AG04449 (cell line): ENCODE measurements at regions of chr20 and their contacts with region 1.

Region 1: GRCh38 chr20:44683263-44684046 is 31.7 kb upstream of the CCN5 start:
- DNase-seq: no peak
- H3K4me3 ChIP-seq: no peak overlapping the region
- CTCF ChIP-seq: peak; percentile 77

Region 2: GRCh38 chr20:44582311-44583025 is 101.0 kb before region 1 on chr20 and contains the start of gene PKIG:
- CTCF ChIA-PET with region 1: no interaction called
- POLR2A ChIA-PET with region 1: no interaction called
- DNase-seq: peak; percentile 29
- H3K4me3 ChIP-seq: peak within 1 kb of the TSS; percentile 60
- CTCF ChIP-seq: no peak

Region 3: GRCh38 chr20:44642203-44643153 is 41.0 kb before region 1 on chr20:
- CTCF ChIA-PET with region 1: interaction called, 18 read pairs
- POLR2A ChIA-PET with region 1: interaction called, 6 read pairs
- DNase-seq: peak; percentile 64
- H3K4me3 ChIP-seq: peak overlapping the region; percentile 20; the same call in 1 of the 2 replicates
- CTCF ChIP-seq: no peak

Region 4: DNA sequence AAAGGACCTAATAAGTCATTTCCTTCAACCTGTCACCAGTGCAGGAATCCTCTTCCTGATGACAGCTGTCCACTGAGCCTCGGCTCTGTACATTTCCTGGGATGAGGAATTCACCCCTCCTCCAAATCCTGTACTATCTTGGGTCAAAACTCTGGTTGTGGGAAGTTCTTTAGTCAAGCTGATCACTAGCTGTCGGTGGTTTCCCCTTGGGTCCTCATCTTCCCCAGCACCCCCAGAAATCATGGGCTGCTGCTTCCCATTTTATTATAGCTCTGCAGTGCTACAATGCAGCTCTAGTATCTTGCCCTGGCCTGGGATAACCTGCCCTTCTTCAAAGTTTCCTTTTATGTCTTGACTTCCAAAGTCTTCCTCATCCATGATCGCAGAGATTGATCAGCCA is 17.4 kb before region 1 on chr20:
- CTCF ChIA-PET with region 1: interaction called, 23 read pairs
- POLR2A ChIA-PET with region 1: no interaction called
- DNase-seq: no peak
- H3K4me3 ChIP-seq: no peak overlapping the region
- CTCF ChIP-seq: no peak

Region 5: DNA sequence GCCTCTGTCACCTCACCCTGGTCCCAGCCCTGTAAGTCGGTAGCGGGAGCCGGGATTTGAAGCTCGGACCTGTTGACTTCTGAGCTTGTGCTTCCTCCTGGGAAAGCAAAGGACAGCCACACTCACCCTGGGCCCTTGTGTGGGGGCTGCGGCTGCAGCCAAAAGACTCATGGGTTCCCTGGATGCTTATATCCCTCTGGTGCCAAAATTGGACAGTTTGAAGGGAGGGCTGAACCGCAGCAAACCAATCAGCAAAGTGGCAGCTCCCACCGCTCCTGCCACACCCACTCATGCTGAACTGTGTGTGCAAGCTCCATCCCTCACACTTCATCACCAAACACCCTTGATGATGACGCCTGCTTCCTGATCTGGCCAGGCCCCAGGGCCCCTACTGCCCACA is 27.8 kb after region 1 on chr20:
- CTCF ChIA-PET with region 1: interaction called, 801 read pairs
- POLR2A ChIA-PET with region 1: no interaction called
- DNase-seq: no peak
- H3K4me3 ChIP-seq: no peak overlapping the region
- CTCF ChIP-seq: no peak

Region 6: GRCh38 chr20:44747166-44748004 is 63.9 kb after region 1 on chr20:
- CTCF ChIA-PET with region 1: interaction called, 169 read pairs
- POLR2A ChIA-PET with region 1: no interaction called
- DNase-seq: no peak
- H3K4me3 ChIP-seq: no peak overlapping the region
- CTCF ChIP-seq: peak; percentile 77

Region 7: GRCh38 chr20:44765652-44766347 is 82.3 kb after region 1 on chr20:
- CTCF ChIA-PET with region 1: no interaction called
- POLR2A ChIA-PET with region 1: no interaction called
- DNase-seq: no peak
- H3K4me3 ChIP-seq: no peak overlapping the region
- CTCF ChIP-seq: no peak

Region 8: GRCh38 chr20:44790638-44791393 is 107.4 kb after region 1 on chr20:
- CTCF ChIA-PET with region 1: no interaction called
- POLR2A ChIA-PET with region 1: no interaction called
- DNase-seq: no peak
- H3K4me3 ChIP-seq: no peak overlapping the region
- CTCF ChIP-seq: no peak

Region 9: GRCh38 chr20:44924570-44924969 is 241.1 kb after region 1 on chr20:
- CTCF ChIA-PET with region 1: no interaction called
- POLR2A ChIA-PET with region 1: no interaction called
- DNase-seq: no peak
- H3K4me3 ChIP-seq: no peak overlapping the region
- CTCF ChIP-seq: no peak